ENCODE measurements at regions of chr2 and their contacts with region 1.

Region 1: DNA sequence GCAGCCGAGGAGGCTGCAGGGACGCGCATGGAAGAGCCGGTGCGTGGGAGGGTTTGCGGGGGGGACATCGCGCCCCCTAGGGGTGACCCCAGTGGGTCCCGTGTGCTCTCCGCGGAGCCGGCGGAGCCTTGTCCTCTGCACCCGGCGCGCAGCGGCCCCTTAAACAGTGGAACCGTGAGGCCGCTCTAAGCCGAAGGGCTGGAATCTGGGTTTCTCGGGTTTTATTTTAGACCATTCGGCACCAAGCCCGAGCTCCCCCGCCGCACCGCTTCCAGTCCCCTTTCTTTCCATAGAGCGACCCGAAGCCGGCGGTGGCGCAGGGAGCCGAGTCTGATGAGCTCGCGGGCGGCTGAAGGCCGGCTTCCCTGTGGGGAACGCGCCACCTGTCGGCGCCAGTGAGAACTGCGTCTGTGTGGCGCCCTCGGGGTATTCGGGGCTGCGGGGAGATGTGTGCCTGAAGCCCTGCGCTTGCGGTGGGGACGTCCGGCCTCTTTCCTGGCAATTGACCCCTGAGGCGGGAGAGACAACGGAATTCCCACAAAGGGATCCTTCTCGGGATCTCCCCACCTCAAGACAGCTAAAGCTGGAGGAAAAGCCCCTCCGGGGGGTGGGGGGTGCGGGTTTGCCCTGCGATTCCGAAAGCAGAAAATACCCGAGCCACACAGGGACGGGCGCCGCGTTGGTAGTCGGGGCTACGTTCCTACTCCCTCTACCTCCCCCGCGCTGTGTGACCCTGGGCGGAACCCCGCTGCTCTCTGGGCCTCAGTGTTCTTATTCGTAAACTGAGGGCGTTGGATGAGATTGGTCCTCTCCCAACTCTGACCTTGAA is 8.2 kb upstream of the EN1 start:
- DNase-seq: peak; percentile 78 to 91
- ATAC-seq: peak; percentile 91 to 95
- H3K4me3 ChIP-seq: peak overlapping the region; percentile 45
- H3K27ac ChIP-seq: peak overlapping the region; percentile 47 to 85; a peak in 5 of 6 replicates
- H3K4me1 ChIP-seq: peaks cover 4% of the 10 kb centered on the region; the same call in 2 of the 3 replicates
- CTCF ChIP-seq: peak; percentile 95
- EP300 ChIP-seq: no peak
- POLR2A ChIP-seq: no peak
- RAD21 ChIP-seq: peak; percentile 85 to 97

Region 2: GRCh38 chr2:118032169-118033013 is 823.3 kb before region 1 on chr2:
- CTCF ChIA-PET with region 1: interaction called, 14 read pairs
- POLR2A ChIA-PET with region 1: no interaction called
- DNase-seq: peak; percentile 29 to 34
- ATAC-seq: peak; percentile 85 to 92
- H3K4me3 ChIP-seq: no peak overlapping the region
- H3K27ac ChIP-seq: no peak overlapping the region
- H3K4me1 ChIP-seq: no peaks in the 10 kb centered on the region
- CTCF ChIP-seq: peak; percentile 71
- EP300 ChIP-seq: no peak
- POLR2A ChIP-seq: no peak
- RAD21 ChIP-seq: peak; percentile 51

Region 3: GRCh38 chr2:118216224-118216623 is 639.4 kb before region 1 on chr2:
- CTCF ChIA-PET with region 1: interaction called, 43 read pairs
- POLR2A ChIA-PET with region 1: no interaction called
- DNase-seq: no peak
- ATAC-seq: no peak
- H3K4me3 ChIP-seq: no peak overlapping the region
- H3K27ac ChIP-seq: no peak overlapping the region
- H3K4me1 ChIP-seq: no peaks in the 10 kb centered on the region
- CTCF ChIP-seq: no peak
- EP300 ChIP-seq: no peak
- POLR2A ChIP-seq: no peak
- RAD21 ChIP-seq: no peak

Region 4: DNA sequence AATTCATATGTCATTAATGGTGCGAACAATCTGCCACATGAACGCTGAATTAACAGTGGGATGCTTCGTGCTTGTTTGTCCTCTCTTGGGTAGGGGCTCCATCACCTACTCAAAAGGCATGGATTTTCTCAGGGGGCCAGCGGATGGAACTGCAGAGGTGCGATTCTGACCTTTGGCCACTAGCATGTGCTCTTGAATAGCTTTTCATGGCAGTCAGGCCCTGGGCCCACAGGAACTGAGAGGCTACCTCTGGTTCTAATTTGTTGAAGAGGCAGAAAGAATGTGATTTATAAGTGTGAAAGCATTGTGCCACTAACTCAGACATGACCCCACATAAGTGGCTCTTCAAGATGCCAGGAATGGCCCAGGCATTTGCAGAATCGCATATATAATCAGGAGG is 484.1 kb before region 1 on chr2:
- CTCF ChIA-PET with region 1: interaction called, 71 read pairs
- POLR2A ChIA-PET with region 1: no interaction called
- DNase-seq: peak; percentile 10 to 44
- ATAC-seq: peak; percentile 86 to 91
- H3K4me3 ChIP-seq: no peak overlapping the region
- H3K27ac ChIP-seq: no peak overlapping the region
- H3K4me1 ChIP-seq: no peaks in the 10 kb centered on the region
- CTCF ChIP-seq: peak; percentile 58
- EP300 ChIP-seq: no peak
- POLR2A ChIP-seq: no peak
- RAD21 ChIP-seq: peak; percentile 79 to 82

Region 5: DNA sequence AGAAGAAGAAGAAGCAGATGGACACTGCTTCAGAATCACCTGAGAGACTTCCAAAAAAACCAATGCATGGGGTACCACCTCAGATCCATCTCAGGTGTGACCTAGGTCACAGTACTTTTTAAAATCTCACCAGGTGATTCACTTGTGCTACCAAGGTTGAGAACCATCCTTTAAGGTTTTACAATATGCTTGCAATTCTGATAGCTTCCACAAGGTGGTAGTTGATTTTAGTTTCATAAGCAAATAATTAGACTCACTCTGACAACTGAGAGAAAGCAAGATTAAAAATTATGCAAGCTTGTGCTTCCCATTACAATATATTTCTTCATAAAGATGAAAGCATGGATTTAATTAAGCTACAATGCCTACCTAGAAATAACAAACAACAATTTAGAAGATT is 363.3 kb before region 1 on chr2:
- CTCF ChIA-PET with region 1: interaction called, 12 read pairs
- POLR2A ChIA-PET with region 1: no interaction called
- DNase-seq: peak in 1 of 2 experiments; percentile 38
- ATAC-seq: 0 out of 6 replicates have a peak, but pooled peaks of 1 of the 2 experiments have one; percentile 35
- H3K4me3 ChIP-seq: no peak overlapping the region
- H3K27ac ChIP-seq: no peak overlapping the region
- H3K4me1 ChIP-seq: no peaks in the 10 kb centered on the region
- CTCF ChIP-seq: peak; percentile 36
- EP300 ChIP-seq: no peak
- POLR2A ChIP-seq: no peak
- RAD21 ChIP-seq: peak; percentile 15 to 38; a peak in 3 of 5 replicates

Region 6: GRCh38 chr2:118826093-118826492 is 29.6 kb before region 1 on chr2:
- CTCF ChIA-PET with region 1: interaction called, 15 read pairs
- POLR2A ChIA-PET with region 1: no interaction called
- DNase-seq: no peak
- ATAC-seq: no peak
- H3K4me3 ChIP-seq: no peak overlapping the region
- H3K27ac ChIP-seq: no peak overlapping the region
- H3K4me1 ChIP-seq: no peaks in the 10 kb centered on the region
- CTCF ChIP-seq: no peak
- EP300 ChIP-seq: no peak
- POLR2A ChIP-seq: no peak
- RAD21 ChIP-seq: no peak

Region 7: GRCh38 chr2:118902266-118903028 is 46.8 kb after region 1 on chr2:
- CTCF ChIA-PET with region 1: no interaction called
- POLR2A ChIA-PET with region 1: no interaction called
- DNase-seq: no peak
- ATAC-seq: no peak
- H3K4me3 ChIP-seq: no peak overlapping the region
- H3K27ac ChIP-seq: no peak overlapping the region
- H3K4me1 ChIP-seq: no peaks in the 10 kb centered on the region
- CTCF ChIP-seq: no peak
- EP300 ChIP-seq: no peak
- POLR2A ChIP-seq: no peak
- RAD21 ChIP-seq: no peak

Region 8: DNA sequence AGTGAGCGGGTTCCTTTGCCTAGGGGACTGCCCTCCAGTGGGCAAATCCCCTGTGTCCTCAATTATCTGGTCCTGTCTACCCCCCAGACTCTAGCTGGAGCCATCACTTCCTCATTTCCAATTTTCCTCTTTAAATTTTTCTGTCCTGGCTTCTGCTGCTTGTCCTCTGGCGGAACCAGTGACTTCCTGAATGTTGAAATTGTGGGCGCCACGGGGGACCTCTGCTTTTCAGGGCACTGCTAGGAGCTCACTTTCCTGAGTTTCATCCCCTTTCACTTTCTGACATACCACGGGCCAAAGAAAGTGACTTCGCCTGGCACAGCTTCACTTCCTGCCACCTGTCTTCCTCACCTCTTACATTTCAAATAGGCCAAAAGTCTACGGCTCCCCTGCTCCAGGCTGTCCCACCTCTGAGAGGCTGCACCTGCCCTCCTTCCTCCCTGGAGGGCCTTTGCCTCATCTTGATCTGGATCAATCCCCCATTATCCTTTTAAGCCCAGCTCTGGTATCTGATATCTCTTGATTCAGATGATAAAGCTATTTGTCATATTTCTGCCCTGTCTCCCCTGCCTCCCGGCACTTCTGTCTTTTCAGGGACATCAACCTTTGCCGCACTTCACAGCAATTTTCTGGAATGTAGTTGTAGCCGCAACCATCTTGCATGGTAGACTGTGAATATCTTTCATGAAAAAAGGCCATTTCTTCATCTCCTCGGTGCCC is 85.0 kb after region 1 on chr2:
- CTCF ChIA-PET with region 1: no interaction called
- POLR2A ChIA-PET with region 1: no interaction called
- DNase-seq: no peak
- ATAC-seq: no peak
- H3K4me3 ChIP-seq: no peak overlapping the region
- H3K27ac ChIP-seq: no peak overlapping the region
- H3K4me1 ChIP-seq: no peaks in the 10 kb centered on the region
- CTCF ChIP-seq: no peak
- EP300 ChIP-seq: no peak
- POLR2A ChIP-seq: no peak
- RAD21 ChIP-seq: no peak